ENCODE measurements at regions of chr1 and their contacts with region 1.

Region 1: GRCh38 chr1:52552505-52553361 is at the start of gene TUT4:
- DNase-seq: peak; percentile 60 to 81 (median 74)
- H3K4me3 ChIP-seq: peak within 1 kb of the TSS; percentile 68 to 100 (median 95)
- H3K27ac ChIP-seq: peak within 1 kb of the TSS; percentile 30 to 97 (median 89)
- H3K27me3 ChIP-seq: no peaks in the 10 kb centered on the region
- CTCF ChIP-seq: peak in 1 of 56 donors; percentile 3
- total RNA-seq, gene TUT4: 50.8 to 116 (median 76.8) TPM

Region 2: DNA sequence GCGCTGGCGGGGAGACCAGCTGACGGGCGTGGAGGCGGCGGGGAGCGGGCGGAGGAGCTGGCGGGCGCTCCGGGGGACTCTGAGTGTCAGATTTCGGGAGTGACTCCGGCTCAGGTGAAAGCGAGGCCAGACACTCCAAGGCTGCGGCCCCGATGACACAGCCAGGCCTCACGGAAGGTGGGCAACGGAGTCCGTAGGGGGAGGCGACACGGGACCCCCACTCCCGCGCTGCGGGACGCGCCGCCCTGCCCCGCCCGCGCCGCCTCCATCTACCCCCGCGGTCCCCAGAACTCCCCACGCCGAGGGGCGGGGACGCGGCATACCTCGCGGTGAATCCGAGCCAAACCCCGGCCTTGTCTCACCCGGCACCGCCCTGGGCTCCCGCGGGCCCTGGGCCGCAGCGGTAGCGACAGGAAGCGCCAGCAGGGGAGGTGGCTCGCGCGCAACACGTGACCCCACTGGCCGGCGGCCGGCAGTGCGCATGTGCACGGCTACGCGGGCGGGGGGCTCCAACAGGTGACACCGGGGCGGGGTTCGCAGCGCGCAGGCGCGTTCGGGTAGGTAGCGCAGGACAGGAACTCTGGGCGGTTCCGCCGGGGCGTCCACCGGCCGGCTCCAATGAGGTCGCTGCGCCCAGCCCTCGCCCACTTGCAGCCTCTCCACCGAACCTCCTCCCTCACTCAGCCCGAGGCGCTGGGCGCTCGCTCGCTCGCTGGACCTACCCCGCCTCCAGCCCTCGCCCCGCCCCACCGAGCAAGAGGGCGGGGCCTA is 186.8 kb before region 1 on chr1 and contains the start of gene CC2D1B:
- intact Hi-C with region 1: loop called (anchors 5 kb)
- DNase-seq: peak; percentile 87 to 98 (median 92)
- H3K4me3 ChIP-seq: peak within 1 kb of the TSS; percentile 66 to 99 (median 94)
- H3K27ac ChIP-seq: peak within 1 kb of the TSS; percentile 55 to 98 (median 92)
- H3K27me3 ChIP-seq: no peaks in the 10 kb centered on the region
- CTCF ChIP-seq: peak in 45 of 56 donors; percentile 10 to 61 (median 40)
- total RNA-seq, gene CC2D1B: 15.7 to 56.7 (median 29.3) TPM

Region 3: DNA sequence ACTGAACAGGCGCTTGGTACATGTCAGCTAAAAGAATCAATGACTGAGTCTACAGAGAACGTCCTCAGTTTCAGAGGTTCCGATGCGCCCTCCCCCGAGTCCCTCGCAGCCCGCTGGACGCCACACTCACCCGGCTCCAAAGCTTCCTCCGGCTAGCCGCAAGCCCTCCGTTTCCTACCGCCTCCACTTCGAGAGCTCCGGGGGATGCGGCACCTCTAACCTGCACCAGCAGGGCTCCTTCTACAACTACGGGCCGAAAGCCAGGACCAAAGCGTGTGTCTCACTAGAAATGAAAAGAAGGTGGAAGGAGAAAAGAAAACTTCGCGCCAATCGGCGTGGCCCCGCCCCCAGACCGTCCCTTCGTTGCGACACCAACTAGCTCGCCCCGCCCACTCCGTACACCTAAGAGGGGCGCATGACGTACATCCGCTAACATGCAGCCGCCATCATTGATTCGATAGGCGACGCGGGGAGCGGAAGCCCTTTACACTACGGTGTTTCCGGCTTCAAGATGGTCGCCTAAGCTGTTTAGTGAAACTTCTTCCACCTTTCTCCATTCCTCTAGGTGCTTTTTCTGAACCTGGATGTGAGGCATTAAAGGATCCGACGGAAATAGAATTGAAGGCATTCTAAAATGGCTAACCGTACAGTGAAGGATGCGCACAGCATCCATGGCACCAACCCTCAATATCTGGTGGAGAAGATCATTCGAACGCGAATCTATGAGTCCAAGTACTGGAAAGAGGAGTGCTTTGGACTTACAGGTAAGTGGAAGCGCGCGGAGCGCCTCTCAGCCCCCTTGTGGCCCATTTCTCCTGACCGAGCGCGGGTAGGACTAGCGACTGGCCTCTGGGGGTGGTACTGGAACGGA is 148.4 kb before region 1 on chr1 and contains the starts of genes ORC1 and PRPF38A:
- intact Hi-C with region 1: loop called in 1 of 2 experiments (anchors 2 kb)
- DNase-seq: peak; percentile 96 to 99 (median 98)
- H3K4me3 ChIP-seq: peak within 1 kb of the TSS; percentile 31 to 99 (median 90)
- H3K27ac ChIP-seq: peak within 1 kb of the TSS in 57 of 59 donors; percentile 20 to 96 (median 85)
- H3K27me3 ChIP-seq: no peaks in the 10 kb centered on the region
- CTCF ChIP-seq: peak in 44 of 56 donors; percentile 8 to 56 (median 38)
- total RNA-seq, gene ORC1: 0.17 to 1.3 (median 0.44) TPM in 115 of 120 experiments, not detected in the others
- total RNA-seq, gene PRPF38A: 30.5 to 72.7 (median 39.3) TPM

Region 4: GRCh38 chr1:52601991-52602855 is 49.5 kb after region 1 on chr1 and contains the start of gene GPX7:
- intact Hi-C with region 1: loop called (anchors 2 to 5 kb)
- DNase-seq: peak in 8 of 10 donors; percentile 18 to 64 (median 46)
- H3K4me3 ChIP-seq: peak within 1 kb of the TSS; percentile 43 to 82 (median 70)
- H3K27ac ChIP-seq: peak within 1 kb of the TSS in 53 of 59 donors; percentile 8 to 87 (median 69)
- H3K27me3 ChIP-seq: no peaks in the 10 kb centered on the region
- CTCF ChIP-seq: peak in 4 of 56 donors; percentile 6 to 18 (median 12)
- total RNA-seq, gene GPX7: 2.3 to 9.0 (median 5.6) TPM